B cell (primary cell): ENCODE measurements at regions of chr6 and their contacts with region 1.

Region 1: DNA sequence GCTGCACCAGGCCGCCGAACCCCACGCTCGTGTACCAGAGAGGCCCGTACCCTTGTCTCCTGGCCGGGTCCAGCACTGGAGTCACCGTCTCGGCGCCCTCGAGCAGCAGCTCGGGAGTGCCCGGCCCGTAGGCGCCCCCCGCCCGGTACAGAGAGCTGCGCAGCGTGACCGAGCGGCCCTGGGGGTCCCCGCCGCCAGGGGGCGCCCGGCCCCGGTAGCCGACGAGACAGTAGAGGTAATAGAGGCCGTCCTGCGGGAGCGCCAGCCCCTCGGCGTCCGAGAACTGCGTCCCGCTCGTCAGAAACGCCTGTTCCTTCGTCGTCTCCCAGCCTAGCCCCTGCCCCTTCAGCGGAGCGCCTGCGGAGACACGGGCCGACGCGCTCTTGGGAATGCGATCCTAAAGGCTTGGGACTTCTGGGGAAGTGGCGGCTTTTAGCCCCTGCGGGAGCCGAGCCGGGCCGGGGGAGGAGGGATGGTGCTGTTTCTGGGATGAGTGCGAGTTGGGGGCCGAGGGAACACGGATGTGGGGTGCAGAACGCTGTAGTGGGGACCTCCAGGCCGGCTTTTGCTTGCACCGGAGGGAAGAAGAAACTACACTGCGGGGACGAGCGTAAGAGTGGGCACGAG is 1.3 kb downstream of the LTB start:
- DNase-seq: peak; percentile 89
- ATAC-seq: peak; percentile 62
- H3K4me3 ChIP-seq: peak overlapping the region; percentile 83 to 100 (median 96)
- H3K4me3 Mint-ChIP-seq: peak overlapping the region; percentile 98
- H3K27ac ChIP-seq: peak overlapping the region; percentile 95 to 97
- H3K27ac Mint-ChIP-seq: peak overlapping the region; percentile 99
- H3K4me1 ChIP-seq: peaks cover 71 to 83% of the 10 kb centered on the region in 2 donors
- H3K4me1 Mint-ChIP-seq: peaks cover 82% of the 10 kb centered on the region
- H3K27me3 ChIP-seq: no peaks in the 10 kb centered on the region
- H3K27me3 Mint-ChIP-seq: no peaks in the 10 kb centered on the region
- CTCF ChIP-seq: peak; percentile 99

Region 2: GRCh38 chr6:31356946-31357466 is 223.9 kb before region 1 on chr6 and contains the start of gene HLA-B:
- CTCF ChIA-PET with region 1: no interaction called
- POLR2A ChIA-PET with region 1: no interaction called
- intact Hi-C with region 1: no loop called
- DNase-seq: peak; percentile 96
- ATAC-seq: peak; percentile 88
- H3K4me3 ChIP-seq: peak within 1 kb of the TSS; percentile 51 to 98 (median 87)
- H3K4me3 Mint-ChIP-seq: peak within 1 kb of the TSS; percentile 99
- H3K27ac ChIP-seq: peak within 1 kb of the TSS; percentile 98 to 100
- H3K27ac Mint-ChIP-seq: peak within 1 kb of the TSS; percentile 100
- H3K4me1 ChIP-seq: peaks cover 43 to 44% of the 10 kb centered on the region in 2 donors
- H3K4me1 Mint-ChIP-seq: peaks cover 55% of the 10 kb centered on the region
- H3K27me3 ChIP-seq: no peaks in the 10 kb centered on the region
- H3K27me3 Mint-ChIP-seq: peaks cover 3% of the 10 kb centered on the region
- CTCF ChIP-seq: no peak
- total RNA-seq, gene HLA-B: 3,910 and 4,028 TPM in 2 replicates

Region 3: DNA sequence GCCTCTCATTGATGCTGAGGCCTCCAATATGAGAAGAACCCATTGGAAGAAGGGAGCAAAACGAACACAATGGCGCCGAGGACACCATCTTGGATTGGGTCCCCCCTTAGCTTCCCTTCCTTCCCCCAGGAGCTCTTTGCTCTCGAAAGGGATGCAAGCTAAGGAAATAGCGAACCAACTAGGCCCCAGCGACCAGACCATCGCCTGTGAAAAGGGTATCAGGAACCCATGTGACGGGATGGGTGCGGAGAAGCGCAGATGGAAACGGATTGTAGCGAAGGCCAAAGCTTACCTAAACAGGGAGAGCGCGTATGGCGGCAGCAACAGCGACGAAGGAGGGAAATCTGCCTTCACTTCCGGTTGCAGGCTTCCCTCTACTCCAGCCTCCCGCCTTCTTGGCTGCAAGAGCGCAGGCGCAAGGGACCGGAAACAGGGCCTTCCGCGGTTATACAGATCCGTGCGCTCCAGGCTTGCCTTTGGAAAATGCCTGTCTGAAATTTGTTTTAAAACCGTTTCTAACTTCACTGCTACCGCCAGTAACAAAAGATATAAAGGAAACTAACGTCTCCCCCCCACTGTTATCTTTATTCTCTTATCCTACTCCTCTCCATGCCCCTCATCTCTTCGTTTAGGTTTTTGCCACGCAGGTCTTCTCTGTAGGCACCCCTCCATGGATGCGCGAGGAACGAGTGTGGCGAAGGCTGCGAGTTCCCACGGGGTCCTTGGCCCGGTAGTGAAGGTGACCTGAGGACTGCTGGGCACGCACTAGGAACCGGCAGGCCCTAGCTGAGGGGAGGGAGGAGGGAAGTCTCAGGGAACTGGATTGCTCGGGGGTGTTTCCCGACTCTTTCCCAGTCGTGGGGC is 39.0 kb before region 1 on chr6 and contains the start of gene DDX39B:
- CTCF ChIA-PET with region 1: interaction called, 2,241 read pairs
- POLR2A ChIA-PET with region 1: interaction called, 1,450 read pairs
- intact Hi-C with region 1: no loop called
- DNase-seq: peak; percentile 97
- ATAC-seq: peak; percentile 72
- H3K4me3 ChIP-seq: peak within 1 kb of the TSS; percentile 79 to 100 (median 97)
- H3K4me3 Mint-ChIP-seq: peak within 1 kb of the TSS; percentile 99
- H3K27ac ChIP-seq: peak within 1 kb of the TSS; percentile 97 to 99
- H3K27ac Mint-ChIP-seq: peak within 1 kb of the TSS; percentile 93
- H3K4me1 ChIP-seq: peaks cover 37 to 43% of the 10 kb centered on the region in 2 donors
- H3K4me1 Mint-ChIP-seq: peaks cover 50% of the 10 kb centered on the region
- H3K27me3 ChIP-seq: no peaks in the 10 kb centered on the region
- H3K27me3 Mint-ChIP-seq: no peaks in the 10 kb centered on the region
- CTCF ChIP-seq: no peak
- total RNA-seq, gene DDX39B: 576 and 577 TPM in 2 replicates

Region 4: DNA sequence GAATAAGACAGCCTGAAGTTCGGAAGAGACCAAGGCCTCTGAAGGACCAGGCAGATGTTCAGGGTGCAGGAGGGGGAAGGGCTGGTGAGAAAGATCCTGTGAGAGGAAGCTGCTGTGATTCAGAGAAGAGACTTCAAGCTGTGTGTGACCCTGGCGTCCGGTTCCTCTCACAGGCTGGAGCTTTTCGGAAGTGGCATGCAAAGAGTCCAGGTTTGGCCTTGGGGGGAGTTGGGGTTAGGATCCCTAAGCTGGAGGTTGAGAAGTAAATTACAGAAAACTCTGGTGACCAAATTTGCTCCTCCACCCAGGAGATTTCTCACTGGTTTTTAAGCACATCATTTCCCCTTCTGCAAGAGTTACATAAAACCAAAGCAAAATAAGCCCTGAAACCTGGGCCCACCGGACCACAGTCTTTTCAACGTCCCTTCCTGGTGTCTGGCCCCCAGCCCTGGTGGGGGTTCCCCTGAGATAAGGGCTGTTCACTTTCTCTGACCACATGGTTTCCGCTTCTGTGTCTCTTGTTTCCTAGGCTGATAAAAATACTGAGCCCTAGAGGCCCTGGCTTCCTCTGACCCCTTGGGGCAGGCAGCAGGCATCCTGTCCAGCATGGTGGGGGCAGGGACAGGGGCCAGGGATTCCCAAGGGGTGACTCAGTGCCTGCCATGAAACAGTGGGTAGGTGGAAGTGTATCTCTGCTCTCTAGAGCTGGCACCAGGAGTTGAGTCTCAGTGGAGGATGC is 20.8 kb before region 1 on chr6:
- CTCF ChIA-PET with region 1: interaction called, 2,241 read pairs
- POLR2A ChIA-PET with region 1: interaction called, 1,450 read pairs
- intact Hi-C with region 1: loop called (anchors 2 kb)
- DNase-seq: peak; percentile 83
- ATAC-seq: peak; percentile 64
- H3K4me3 ChIP-seq: peak overlapping the region; percentile 4 to 61 (median 45)
- H3K4me3 Mint-ChIP-seq: peak overlapping the region; percentile 92
- H3K27ac ChIP-seq: peak overlapping the region; percentile 80 to 87
- H3K27ac Mint-ChIP-seq: peak overlapping the region; percentile 94
- H3K4me1 ChIP-seq: peaks cover 80 to 81% of the 10 kb centered on the region in 2 donors
- H3K4me1 Mint-ChIP-seq: peaks cover 82% of the 10 kb centered on the region
- H3K27me3 ChIP-seq: no peaks in the 10 kb centered on the region
- H3K27me3 Mint-ChIP-seq: no peaks in the 10 kb centered on the region
- CTCF ChIP-seq: no peak

Region 5: GRCh38 chr6:31702819-31703522 is 122.1 kb after region 1 on chr6 and contains the start of gene ABHD16A:
- CTCF ChIA-PET with region 1: no interaction called
- POLR2A ChIA-PET with region 1: no interaction called
- intact Hi-C with region 1: no loop called
- DNase-seq: peak; percentile 99
- ATAC-seq: peak; percentile 95
- H3K4me3 ChIP-seq: peak within 1 kb of the TSS; percentile 65 to 98 (median 96)
- H3K4me3 Mint-ChIP-seq: peak within 1 kb of the TSS; percentile 98
- H3K27ac ChIP-seq: peak within 1 kb of the TSS; percentile 87 to 93
- H3K27ac Mint-ChIP-seq: peak within 1 kb of the TSS; percentile 91
- H3K4me1 ChIP-seq: peaks cover 20 to 28% of the 10 kb centered on the region in 2 donors
- H3K4me1 Mint-ChIP-seq: peaks cover 32% of the 10 kb centered on the region
- H3K27me3 ChIP-seq: no peaks in the 10 kb centered on the region
- H3K27me3 Mint-ChIP-seq: no peaks in the 10 kb centered on the region
- CTCF ChIP-seq: no peak
- total RNA-seq, gene ABHD16A: 78.3 and 90.3 TPM in 2 replicates